ENCODE measurements at regions of chr2 and their contacts with region 1.

Region 1: DNA sequence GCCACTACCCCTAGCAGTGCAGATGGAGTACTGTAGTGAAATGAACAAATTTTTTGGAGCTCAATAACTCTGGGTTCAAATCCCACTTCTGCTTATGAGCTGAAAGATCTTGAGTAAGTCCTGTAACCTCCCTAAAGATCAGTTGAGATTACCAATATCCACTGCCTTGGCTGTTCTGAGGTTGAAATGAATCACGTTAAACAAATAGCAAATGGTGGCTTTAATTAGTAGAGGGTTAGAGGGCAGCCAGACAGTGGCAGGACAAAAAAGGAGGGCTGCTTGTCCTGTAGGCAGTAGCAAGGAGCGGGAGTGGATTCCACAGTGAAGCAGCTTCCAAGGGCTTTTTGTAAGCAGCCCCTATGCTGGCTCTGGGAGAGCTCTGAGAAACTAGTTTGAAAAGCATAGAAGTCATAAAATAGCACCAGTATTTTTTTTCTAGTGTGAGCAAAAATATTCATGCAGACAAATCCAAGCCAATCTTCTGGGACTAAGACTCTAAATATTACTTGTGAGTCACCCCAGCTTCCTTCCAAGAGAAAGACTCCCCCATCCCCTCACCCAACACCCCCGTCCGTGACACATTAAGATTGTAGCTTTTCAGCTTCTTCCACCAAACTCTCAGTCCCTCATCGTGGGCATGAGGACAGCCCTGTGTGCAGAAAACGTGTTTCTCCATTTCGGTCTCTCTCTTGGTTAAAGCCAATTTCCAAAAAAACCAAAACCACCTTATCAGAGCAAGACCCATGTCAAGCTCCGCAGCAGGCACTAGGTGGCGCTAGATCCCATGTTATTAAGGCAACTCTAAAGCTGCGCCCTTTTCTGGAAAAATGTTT is 123.5 kb upstream of the LGALSL start:
- DNase-seq: peak; percentile 85
- ATAC-seq: no peak
- H3K4me3 Mint-ChIP-seq: peak overlapping the region; percentile 15
- H3K27ac Mint-ChIP-seq: peak overlapping the region; percentile 55
- H3K4me1 Mint-ChIP-seq: peaks cover 58% of the 10 kb centered on the region
- H3K27me3 Mint-ChIP-seq: peaks cover 8% of the 10 kb centered on the region

Region 2: DNA sequence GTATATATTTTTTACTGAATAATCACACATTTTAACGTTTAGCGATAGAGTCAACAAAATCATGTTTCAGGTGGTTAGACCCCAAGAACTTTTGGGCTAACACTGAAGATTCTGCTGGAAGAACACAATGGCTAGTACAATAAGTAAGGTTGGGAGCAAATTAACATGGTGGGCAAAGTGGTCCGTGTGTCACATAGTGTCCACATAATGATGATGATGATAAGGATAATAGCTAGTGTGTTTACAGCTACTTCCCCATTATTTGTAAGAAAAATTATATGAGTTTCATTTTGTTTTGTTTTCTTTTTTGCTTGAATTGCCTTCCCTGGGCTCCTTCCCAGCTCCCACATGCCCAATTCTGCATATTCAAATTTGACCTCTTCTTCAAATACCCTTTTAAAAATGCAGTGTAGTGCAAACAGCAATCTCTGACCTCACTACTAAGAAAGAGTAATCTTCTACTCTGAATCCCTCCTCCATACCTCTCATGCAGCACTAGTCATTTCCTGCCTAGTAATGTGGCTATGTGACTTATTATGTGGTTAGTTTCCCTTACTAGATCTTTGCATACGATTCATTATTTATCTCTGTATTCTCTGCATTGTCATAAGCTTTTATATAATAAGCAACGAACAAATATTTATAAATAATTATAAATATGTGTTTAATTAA is 294.3 kb before region 1 on chr2:
- CTCF ChIA-PET with region 1: interaction called, 17 read pairs
- POLR2A ChIA-PET with region 1: interaction called, 3 read pairs
- DNase-seq: peak; percentile 57
- ATAC-seq: peak; percentile 98
- H3K4me3 Mint-ChIP-seq: peak overlapping the region; percentile 19
- H3K27ac Mint-ChIP-seq: peak overlapping the region; percentile 79
- H3K4me1 Mint-ChIP-seq: peaks cover 37% of the 10 kb centered on the region
- H3K27me3 Mint-ChIP-seq: no peaks in the 10 kb centered on the region

Region 3: DNA sequence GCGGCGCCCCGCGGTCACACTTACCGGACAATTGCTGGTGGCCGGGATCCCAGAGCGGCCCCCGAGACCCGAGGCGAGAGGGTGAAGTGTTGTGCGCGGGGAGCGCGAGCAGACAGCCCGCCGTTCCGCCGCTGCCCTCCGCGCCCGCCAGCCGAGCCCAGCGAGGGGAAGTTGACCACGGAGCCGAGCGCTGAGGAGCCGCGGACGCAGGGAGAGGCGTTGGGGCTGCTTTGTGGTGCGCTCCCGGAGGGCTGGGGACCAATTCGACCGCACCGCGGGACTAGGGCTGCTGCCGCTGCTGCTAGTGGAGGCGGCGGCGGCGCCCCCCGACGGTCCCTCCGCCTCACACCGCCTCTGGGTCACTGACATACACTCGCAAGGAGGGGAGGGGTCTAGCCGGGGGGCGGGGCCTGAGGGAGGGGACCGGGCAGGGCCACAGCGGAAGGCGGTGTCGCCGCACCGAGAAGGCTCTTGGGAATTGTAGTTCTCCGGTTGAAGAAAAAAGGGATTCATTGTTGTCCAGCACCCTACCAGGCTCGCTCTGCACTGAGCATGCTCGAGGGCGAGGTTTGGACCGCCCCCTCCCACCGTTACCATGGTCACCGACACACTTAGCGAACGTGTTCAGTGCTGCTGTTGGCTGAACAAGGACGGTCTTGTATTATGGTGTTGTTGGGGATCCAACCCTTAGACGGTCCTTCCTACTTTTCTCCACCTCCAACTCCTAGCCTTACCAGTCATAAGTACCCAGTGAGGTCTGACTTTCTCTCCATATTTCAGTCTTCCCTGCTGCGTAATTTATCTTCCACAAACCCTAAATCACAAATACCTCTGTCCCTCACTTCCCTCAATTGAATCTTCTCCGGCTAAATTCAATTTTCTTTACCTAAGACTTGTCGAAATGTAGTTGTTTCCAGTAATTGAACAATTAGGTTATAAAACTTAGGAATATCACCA is 186.2 kb before region 1 on chr2 and contains the start of gene PELI1:
- CTCF ChIA-PET with region 1: interaction called, 25 read pairs
- POLR2A ChIA-PET with region 1: interaction called, 24 read pairs
- DNase-seq: peak; percentile 95
- ATAC-seq: peak; percentile 90
- H3K4me3 Mint-ChIP-seq: peak within 1 kb of the TSS; percentile 97
- H3K27ac Mint-ChIP-seq: peak within 1 kb of the TSS; percentile 97
- H3K4me1 Mint-ChIP-seq: peaks cover 26% of the 10 kb centered on the region
- H3K27me3 Mint-ChIP-seq: no peaks in the 10 kb centered on the region
- total RNA-seq, gene PELI1: 21.1 to 21.9 TPM

Region 4: GRCh38 chr2:64192125-64192479 is 138.4 kb before region 1 on chr2:
- CTCF ChIA-PET with region 1: no interaction called
- POLR2A ChIA-PET with region 1: no interaction called
- DNase-seq: no peak
- ATAC-seq: no peak
- H3K4me3 Mint-ChIP-seq: no peak overlapping the region
- H3K27ac Mint-ChIP-seq: no peak overlapping the region
- H3K4me1 Mint-ChIP-seq: peaks cover 5% of the 10 kb centered on the region
- H3K27me3 Mint-ChIP-seq: peaks cover 3% of the 10 kb centered on the region

Region 5: GRCh38 chr2:64228126-64228678 is 102.3 kb before region 1 on chr2:
- CTCF ChIA-PET with region 1: interaction called, 18 read pairs
- POLR2A ChIA-PET with region 1: interaction called, 3 read pairs
- DNase-seq: peak; percentile 69
- ATAC-seq: peak; percentile 96
- H3K4me3 Mint-ChIP-seq: peak overlapping the region; percentile 80
- H3K27ac Mint-ChIP-seq: peak overlapping the region; percentile 77
- H3K4me1 Mint-ChIP-seq: peaks cover 16% of the 10 kb centered on the region
- H3K27me3 Mint-ChIP-seq: no peaks in the 10 kb centered on the region

Region 6: DNA sequence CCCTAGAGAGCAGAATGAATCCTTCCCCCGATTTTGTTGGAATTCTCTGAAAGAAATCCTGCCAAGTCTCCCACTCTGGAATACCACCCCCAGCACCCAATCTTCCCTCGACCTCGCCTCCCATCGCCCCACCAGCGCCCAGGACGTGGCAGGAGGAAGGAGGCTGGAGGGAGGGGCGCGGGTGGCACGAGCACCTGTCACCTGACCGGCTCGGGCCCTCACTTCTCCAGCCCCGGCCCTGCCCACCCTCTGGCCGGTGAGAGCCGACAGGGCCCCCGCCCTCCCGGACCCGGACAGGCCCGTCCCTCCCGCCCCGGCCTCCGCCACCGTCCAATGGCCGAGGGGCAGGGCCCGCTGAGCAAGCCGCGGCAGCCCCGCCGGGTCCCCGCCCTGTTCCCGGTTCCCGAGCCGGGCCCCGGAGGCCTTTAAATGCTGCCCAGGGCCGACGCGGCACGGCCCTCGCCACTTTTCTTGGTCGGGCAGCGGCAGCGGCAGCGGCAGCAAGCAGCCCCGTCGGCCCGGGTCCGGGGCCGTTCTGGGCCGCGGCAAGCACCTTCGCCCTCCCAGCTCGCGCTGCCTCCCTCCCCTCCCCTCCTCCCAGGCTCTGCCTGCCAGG is 123.4 kb after region 1 on chr2 and contains the start of gene LGALSL:
- CTCF ChIA-PET with region 1: interaction called, 33 read pairs
- POLR2A ChIA-PET with region 1: no interaction called
- DNase-seq: peak; percentile 45
- ATAC-seq: peak; percentile 76
- H3K4me3 Mint-ChIP-seq: peak within 1 kb of the TSS; percentile 77
- H3K27ac Mint-ChIP-seq: peak within 1 kb of the TSS; percentile 16
- H3K4me1 Mint-ChIP-seq: peaks cover 12% of the 10 kb centered on the region
- H3K27me3 Mint-ChIP-seq: peaks cover 20% of the 10 kb centered on the region
- total RNA-seq, gene LGALSL: 0.73 to 1.1 TPM

Region 7: DNA sequence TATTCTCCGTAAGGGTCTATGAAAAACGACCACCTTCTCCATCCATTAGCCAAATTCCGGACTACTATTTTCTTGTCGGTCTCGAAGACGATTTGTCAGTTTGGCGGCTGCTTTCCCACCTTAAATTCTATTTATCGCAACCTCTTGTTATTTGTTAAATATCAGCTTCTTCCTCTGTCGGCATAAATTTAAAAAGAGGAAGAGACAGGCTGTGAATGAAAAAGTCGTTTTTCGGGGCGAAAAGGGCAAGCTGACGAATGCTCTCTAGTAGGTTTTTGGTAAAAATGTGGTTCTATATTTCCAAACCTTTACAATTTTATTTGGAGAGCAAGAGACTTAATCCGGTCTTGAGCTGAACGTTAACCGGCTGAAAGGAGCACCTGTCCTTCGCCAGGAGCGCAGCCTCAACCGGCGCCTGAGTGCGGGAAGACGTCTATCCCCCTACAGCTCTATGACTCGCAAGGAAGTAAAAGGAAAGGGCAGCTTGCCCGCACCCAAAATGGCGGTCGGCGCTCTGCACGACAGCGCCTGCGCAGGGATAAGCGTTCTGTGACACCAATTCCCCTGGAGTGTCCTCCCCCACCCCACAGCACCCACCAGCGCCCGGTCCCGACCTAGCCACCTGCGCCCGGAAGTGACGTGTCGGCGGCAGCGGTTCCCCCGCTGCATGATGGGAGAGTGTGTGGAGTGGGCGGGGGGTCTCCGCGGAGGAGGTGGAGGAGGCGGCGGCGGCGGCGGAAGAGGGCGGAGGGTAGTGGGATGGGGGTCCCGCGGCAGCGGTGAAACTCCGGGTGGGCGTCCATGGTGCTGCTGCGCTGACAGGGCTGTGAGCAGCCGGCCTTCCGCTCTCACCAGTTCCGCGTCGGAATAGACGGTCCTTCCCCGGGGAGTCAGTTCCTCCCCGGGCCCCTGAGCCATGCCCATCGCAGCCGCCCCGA is 193.4 kb after region 1 on chr2 and contains the start of gene AFTPH:
- CTCF ChIA-PET with region 1: interaction called, 54 read pairs
- POLR2A ChIA-PET with region 1: interaction called, 15 read pairs
- DNase-seq: peak; percentile 100
- ATAC-seq: peak; percentile 93
- H3K4me3 Mint-ChIP-seq: peak within 1 kb of the TSS; percentile 99
- H3K27ac Mint-ChIP-seq: peak within 1 kb of the TSS; percentile 99
- H3K4me1 Mint-ChIP-seq: peaks cover 36% of the 10 kb centered on the region
- H3K27me3 Mint-ChIP-seq: peaks cover 6% of the 10 kb centered on the region
- total RNA-seq, gene AFTPH: 26.3 to 27.2 TPM

Region 8: GRCh38 chr2:64644177-64645004 is 313.9 kb after region 1 on chr2:
- CTCF ChIA-PET with region 1: interaction called, 11 read pairs
- POLR2A ChIA-PET with region 1: no interaction called
- DNase-seq: peak; percentile 82
- ATAC-seq: peak; percentile 87
- H3K4me3 Mint-ChIP-seq: peak overlapping the region; percentile 83
- H3K27ac Mint-ChIP-seq: peak overlapping the region; percentile 93
- H3K4me1 Mint-ChIP-seq: peaks cover 91% of the 10 kb centered on the region
- H3K27me3 Mint-ChIP-seq: no peaks in the 10 kb centered on the region